ENCODE measurements at regions of chr10 and their contacts with region 1.

Region 1: GRCh38 chr10:67884313-67884841 is at the start of gene SIRT1:
- DNase-seq: peak; percentile 98
- H3K4me3 ChIP-seq: peak within 1 kb of the TSS; percentile 63 to 84 (median 78)
- H3K27ac ChIP-seq: peak within 1 kb of the TSS; percentile 94 to 98 (median 96)
- H3K4me1 ChIP-seq: peaks cover 0 to 38% (median 11%) of the 10 kb centered on the region in 4 donors
- H3K27me3 ChIP-seq: no peaks in the 10 kb centered on the region
- CTCF ChIP-seq: no peak
- EP300 ChIP-seq: no peak
- POLR2A ChIP-seq: peak; percentile 93
- total RNA-seq, gene SIRT1: 12.5 to 23.8 (median 20.7) TPM

Region 2: GRCh38 chr10:68074775-68075549 is 190.6 kb after region 1 on chr10 and contains the start of gene HERC4:
- in situ Hi-C with region 1: loop called in 1 of 4 experiments (anchors 25 kb)
- intact Hi-C with region 1: no loop called
- DNase-seq: peak; percentile 96
- H3K4me3 ChIP-seq: peak within 1 kb of the TSS; percentile 62 to 99 (median 82)
- H3K27ac ChIP-seq: peak within 1 kb of the TSS; percentile 96 to 100 (median 98)
- H3K4me1 ChIP-seq: peaks cover 11 to 37% (median 26%) of the 10 kb centered on the region in 4 donors
- H3K27me3 ChIP-seq: no peaks in the 10 kb centered on the region
- CTCF ChIP-seq: peak in 1 of 5 experiments; percentile 1
- EP300 ChIP-seq: no peak
- POLR2A ChIP-seq: peak; percentile 91
- total RNA-seq, gene HERC4: 32.0 to 154 (median 105) TPM